OCI-LY7 (cell line): ENCODE measurements at regions of chr3 and their contacts with region 1.

Region 1: GRCh38 chr3:131502530-131503245 is at the start of gene MRPL3:
- DNase-seq: peak; percentile 92
- H3K4me3 ChIP-seq: peak within 1 kb of the TSS; percentile 99
- H3K27ac ChIP-seq: peak within 1 kb of the TSS; percentile 60
- H3K4me1 ChIP-seq: peaks cover 19% of the 10 kb centered on the region
- CTCF ChIP-seq: no peak
- total RNA-seq, gene MRPL3: 121 and 135 TPM in 2 replicates

Region 2: DNA sequence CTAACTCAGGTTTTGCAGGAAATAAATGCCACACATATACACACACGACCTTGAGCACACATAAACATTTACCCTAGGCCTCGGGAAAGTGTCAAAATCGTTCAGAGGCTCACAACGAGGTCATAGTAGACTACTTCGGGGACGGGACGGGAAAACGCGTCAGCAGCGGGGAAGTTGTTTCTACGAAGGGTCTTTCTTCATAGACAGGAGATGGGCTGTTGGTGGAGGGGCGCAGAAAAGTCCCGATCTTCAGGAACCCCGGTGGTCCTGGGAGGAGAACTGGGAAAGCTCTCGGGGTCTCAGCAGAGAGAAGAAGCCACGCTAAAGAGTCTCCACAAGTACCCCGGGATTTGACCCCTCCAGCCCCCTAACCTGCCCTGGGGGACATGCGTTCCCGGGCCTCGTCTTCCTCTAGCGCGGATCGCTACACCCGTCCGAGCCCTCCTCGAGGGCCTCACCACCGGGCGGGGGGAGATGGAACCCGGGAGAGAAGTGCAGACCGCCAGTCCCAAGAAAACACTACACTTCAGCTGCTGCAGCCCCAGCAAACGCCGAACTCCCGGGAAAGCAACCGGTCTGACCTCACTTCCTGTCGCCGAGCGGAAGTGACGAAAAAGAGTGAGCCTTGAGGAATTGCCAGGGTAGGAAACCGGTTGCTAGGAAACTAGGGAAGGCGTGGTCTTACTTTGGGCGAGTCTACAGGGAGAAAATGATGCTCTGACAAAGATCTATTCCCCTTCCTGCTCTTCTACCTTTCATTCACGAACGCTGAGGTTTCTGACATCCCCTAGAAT is 756.2 kb before region 1 on chr3 and contains the start of gene PIK3R4:
- CTCF ChIA-PET with region 1: no interaction called
- POLR2A ChIA-PET with region 1: interaction called, 4 read pairs
- intact Hi-C with region 1: loop called (anchors 5 kb)
- DNase-seq: peak; percentile 97
- H3K4me3 ChIP-seq: peak within 1 kb of the TSS; percentile 75
- H3K27ac ChIP-seq: peak within 1 kb of the TSS; percentile 45
- H3K4me1 ChIP-seq: peaks cover 42% of the 10 kb centered on the region
- CTCF ChIP-seq: no peak
- total RNA-seq, gene PIK3R4: 25.0 and 30.3 TPM in 2 replicates

Region 3: DNA sequence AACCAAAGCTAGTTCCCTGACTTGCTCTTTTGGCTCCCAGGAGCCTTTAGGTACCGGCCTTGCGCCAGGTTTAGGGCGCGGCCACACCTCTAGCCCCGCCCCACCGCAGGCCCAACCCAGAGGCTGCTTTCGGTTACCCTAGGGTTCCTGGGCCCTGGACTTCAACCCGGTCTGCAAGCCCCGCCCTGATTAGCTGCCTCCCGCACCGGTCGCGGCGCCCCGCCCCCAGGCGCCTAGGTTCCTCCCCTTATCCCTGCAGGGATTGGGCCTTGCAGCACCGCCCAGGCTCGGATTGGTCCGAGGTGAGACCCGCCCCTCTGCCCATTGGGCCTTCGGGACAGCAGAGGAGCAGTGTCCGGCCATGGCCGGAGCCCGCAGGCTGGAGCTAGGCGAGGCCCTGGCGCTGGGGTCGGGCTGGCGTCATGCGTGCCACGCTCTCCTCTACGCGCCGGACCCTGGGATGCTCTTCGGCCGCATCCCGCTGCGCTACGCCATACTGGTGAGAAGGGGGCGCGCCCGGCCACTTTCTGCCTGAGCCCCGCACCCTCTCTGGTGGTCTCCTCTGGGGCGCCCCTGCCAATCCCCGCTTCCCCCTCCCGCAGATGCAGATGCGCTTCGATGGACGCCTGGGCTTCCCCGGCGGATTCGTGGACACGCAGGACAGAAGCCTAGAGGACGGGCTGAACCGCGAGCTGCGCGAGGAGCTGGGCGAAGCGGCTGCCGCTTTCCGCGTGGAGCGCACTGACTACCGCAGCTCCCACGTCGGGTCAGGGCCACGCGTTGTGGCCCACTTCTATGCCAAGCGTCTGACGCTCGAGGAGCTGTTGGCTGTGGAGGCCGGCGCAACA is 121.0 kb before region 1 on chr3 and contains the start of gene NUDT16:
- CTCF ChIA-PET with region 1: no interaction called
- POLR2A ChIA-PET with region 1: no interaction called
- intact Hi-C with region 1: loop called (anchors 2 kb)
- DNase-seq: peak; percentile 97
- H3K4me3 ChIP-seq: peak within 1 kb of the TSS; percentile 88
- H3K27ac ChIP-seq: no peak within 1 kb of the TSS
- H3K4me1 ChIP-seq: no peaks in the 10 kb centered on the region
- CTCF ChIP-seq: 0 out of 2 replicates have a peak, but pooled peaks have one; percentile 14
- total RNA-seq, gene NUDT16: 8.7 and 9.0 TPM in 2 replicates

Region 4: DNA sequence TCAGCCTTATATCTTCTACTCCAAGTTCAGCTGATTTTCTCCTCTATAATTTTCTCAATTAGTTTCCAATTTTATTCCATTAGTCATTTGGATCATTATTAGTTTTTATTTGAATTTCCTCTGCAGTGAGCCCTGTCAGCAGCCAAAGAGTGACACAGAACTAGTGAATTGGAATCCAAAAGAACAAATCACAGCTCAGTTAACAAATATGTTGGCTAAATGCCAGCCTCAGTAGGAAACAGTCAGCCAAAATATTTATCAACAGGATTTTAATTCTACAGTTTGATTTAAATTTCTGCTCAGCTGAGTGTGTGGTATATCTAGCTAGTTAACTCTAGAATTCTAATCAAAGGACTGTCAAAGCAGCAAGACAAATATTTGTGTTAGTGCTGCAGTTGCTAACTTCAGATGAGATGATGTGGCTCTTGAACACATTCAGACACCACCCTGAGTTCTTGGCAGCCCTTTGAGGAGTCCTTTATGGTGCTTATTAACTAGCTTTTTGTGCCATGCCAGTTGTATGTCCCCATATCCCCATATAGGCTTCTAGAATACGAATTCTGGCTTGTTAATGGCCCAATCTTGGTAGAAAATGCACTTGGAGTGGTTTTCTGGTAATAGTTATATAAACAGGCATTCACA is 337.6 kb after region 1 on chr3:
- CTCF ChIA-PET with region 1: no interaction called
- POLR2A ChIA-PET with region 1: no interaction called
- intact Hi-C with region 1: no loop called
- DNase-seq: no peak
- H3K4me3 ChIP-seq: no peak overlapping the region
- H3K27ac ChIP-seq: no peak overlapping the region
- H3K4me1 ChIP-seq: no peaks in the 10 kb centered on the region
- CTCF ChIP-seq: no peak